Pancreas (tissue), 10 donors: ENCODE measurements at regions of chr1 and their contacts with region 1.

Region 1: DNA sequence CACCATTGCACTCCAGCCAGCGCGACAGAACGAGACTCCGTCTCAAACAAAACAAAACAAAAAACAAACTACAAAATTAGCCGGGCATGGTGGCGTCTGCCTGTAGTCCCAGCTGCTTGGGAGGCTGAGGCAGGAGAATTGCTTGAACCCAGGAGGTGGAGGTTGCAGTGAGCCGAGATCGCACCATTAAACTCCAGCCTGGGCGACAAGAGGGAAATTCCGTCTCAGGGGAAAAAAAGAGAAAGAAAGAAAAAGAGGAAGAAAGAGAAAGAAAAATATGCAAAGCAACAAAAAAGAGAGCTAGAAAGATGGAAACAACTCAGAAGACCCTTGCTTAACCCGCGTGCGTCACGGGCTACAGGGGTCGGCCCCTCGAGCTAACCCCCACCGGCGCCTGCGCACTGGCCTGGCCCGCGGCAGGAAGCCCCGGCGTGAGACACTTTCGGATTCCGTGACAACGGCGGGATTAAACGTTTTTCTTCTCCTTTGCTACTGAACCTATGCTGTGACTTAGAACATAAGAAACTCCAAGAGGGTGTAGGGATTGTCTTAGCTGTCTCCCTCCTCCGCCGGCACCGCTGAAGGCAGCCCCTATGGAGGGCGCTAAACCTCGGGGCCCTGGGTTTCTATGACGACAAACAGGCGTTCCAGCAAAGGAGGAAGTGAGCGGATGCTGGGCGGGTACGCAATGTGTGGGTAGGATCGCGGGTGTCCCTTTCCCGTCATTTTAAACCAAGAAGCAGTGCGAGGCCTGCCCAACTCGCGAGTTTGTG is at the start of gene AXDND1:
- DNase-seq: peak; percentile 76 to 92 (median 85)
- ATAC-seq: peak; percentile 94 to 98 (median 96)
- H3K4me3 ChIP-seq: peak within 1 kb of the TSS; percentile 43 to 71 (median 66)
- H3K27ac ChIP-seq: peak within 1 kb of the TSS; percentile 64 to 94 (median 80)
- H3K4me1 ChIP-seq: peaks cover 0 to 3% (median 0%) of the 10 kb centered on the region in 3 donors
- H3K27me3 ChIP-seq: no peaks in the 10 kb centered on the region
- CTCF ChIP-seq: peak in 1 of 4 donors; percentile 12
- total RNA-seq, gene AXDND1: 0.09 to 0.42 (median 0.30) TPM in 4 of 6 donors, not detected in the others

Region 2: DNA sequence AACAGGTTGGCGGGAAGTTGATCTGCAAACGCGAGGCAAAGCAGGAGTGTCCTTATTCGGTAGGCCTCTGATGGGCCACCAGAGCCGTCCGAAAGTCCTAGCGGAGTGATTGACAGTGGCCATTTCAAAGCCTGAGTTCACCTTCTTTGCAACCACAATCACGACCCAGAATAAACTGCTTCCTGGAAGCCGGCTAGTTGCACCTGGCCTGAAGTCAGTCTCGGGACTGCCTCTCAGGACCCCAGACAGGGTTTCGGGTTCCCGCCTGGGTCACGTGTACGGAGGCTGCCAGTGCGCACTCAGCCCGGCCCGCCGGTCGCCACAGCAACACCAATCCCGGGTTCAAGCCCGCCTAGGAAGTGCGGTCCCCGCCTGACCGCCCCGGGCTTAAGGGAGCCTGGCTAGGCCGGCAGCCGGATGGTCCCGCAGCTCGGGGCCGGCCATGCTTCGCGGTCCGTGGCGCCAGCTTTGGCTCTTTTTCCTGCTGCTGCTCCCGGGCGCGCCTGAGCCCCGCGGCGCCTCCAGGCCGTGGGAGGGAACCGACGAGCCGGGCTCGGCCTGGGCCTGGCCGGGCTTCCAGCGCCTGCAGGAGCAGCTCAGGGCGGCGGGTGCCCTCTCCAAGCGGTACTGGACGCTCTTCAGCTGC is 283.7 kb before region 1 on chr1 and contains the start of gene TOR3A:
- intact Hi-C with region 1: loop called in 1 of 3 experiments (anchors 5 kb)
- DNase-seq: peak; percentile 92 to 97 (median 94)
- ATAC-seq: peak; percentile 94 to 98 (median 96)
- H3K4me3 ChIP-seq: peak within 1 kb of the TSS; percentile 85 to 97 (median 88)
- H3K27ac ChIP-seq: peak within 1 kb of the TSS; percentile 65 to 82 (median 77)
- H3K4me1 ChIP-seq: peaks cover 0 to 9% (median 0%) of the 10 kb centered on the region in 3 donors
- H3K27me3 ChIP-seq: no peaks in the 10 kb centered on the region
- CTCF ChIP-seq: no peak
- total RNA-seq, gene TOR3A: 8.3 to 16.3 (median 13.1) TPM

Region 3: DNA sequence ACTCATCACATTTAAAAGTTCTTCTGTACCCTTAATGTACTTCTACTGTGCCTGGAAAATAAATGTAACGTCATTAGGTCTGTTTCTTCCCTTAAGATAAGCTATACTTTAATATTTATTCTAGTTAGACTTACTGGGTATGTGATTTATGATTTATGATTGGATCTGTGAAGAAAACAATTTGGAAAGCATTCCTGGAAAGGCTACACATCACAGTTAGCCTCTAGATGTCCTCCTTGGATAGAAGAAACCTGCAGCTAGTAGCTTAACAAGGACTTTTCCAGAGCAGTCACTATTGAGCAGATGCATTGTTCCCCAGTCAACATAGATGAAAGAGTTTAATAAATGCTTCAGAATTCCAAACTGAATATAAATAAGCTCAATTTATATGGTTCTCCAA is 113.8 kb before region 1 on chr1:
- intact Hi-C with region 1: loop called in 2 of 3 experiments (anchors 5 to 10 kb)
- DNase-seq: peak in 2 of 6 donors; percentile 5 to 19
- ATAC-seq: peak; percentile 87 to 100 (median 98)
- H3K4me3 ChIP-seq: no peak overlapping the region
- H3K27ac ChIP-seq: no peak overlapping the region
- H3K4me1 ChIP-seq: no peaks in the 10 kb centered on the region
- H3K27me3 ChIP-seq: no peaks in the 10 kb centered on the region
- CTCF ChIP-seq: peak in 3 of 4 donors; percentile 23 to 39 (median 27)

Region 4: DNA sequence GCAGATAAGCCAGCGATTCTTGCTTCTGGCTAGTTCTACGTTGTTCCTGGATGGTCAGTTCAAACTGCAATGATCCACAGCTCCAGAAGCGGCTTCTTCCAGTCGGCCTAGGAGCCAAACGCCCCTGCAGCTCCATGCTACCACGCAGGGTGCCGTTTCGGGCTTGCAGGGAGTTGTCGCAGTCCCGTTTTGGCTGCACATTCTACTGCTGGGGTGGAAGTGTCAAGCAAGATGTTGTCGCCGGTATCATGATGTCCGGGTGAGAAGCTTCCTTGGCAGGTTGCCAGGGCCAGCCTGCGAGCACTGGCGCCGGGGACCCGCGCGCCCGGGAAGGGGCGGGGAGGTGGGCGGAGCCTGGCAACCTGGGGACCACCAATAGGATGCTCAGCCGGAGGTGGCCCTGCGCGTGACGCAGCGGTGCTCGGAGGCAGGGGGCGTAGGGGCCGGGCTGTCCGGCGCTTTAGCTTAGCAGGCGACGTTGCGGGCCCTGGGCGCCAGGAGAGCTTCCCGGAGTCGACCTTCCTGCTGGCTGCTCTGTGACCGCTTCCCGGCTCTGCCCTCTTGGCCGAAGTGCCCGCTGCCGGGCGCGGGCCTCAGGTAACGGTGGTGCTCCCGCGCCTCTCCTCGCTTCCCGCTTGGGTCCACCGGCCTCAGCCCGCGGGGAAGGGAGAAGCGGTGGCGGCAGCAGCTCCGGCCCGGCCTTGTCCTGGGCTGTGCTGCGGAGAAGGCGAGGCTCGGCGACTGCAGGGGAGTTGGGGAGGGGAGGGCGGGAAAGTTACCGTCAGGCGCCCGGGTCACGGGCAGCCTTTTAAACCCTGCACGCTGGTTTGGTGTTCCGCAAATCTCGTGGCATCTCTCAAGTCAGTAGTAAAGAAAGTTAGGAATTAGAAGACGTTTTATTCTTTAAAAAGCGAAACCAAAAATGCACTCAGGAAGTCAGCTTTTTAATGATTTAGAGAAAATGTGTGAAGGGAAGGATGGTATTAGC is 71.9 kb before region 1 on chr1 and contains the start of gene SOAT1:
- intact Hi-C with region 1: loop called in 1 of 3 experiments (anchors 10 kb)
- DNase-seq: peak; percentile 91 to 98 (median 94)
- ATAC-seq: peak; percentile 88 to 96 (median 92)
- H3K4me3 ChIP-seq: peak within 1 kb of the TSS; percentile 31 to 72 (median 64)
- H3K27ac ChIP-seq: peak within 1 kb of the TSS; percentile 86 to 90 (median 87)
- H3K4me1 ChIP-seq: peaks cover 7 to 33% (median 9%) of the 10 kb centered on the region in 3 donors
- H3K27me3 ChIP-seq: no peaks in the 10 kb centered on the region
- CTCF ChIP-seq: no peak
- total RNA-seq, gene SOAT1: 29.7 to 66.8 (median 43.1) TPM